Cardiac septum (tissue), 1 donor: ENCODE measurements at regions of chr2 and their contacts with region 1.

Region 1: DNA sequence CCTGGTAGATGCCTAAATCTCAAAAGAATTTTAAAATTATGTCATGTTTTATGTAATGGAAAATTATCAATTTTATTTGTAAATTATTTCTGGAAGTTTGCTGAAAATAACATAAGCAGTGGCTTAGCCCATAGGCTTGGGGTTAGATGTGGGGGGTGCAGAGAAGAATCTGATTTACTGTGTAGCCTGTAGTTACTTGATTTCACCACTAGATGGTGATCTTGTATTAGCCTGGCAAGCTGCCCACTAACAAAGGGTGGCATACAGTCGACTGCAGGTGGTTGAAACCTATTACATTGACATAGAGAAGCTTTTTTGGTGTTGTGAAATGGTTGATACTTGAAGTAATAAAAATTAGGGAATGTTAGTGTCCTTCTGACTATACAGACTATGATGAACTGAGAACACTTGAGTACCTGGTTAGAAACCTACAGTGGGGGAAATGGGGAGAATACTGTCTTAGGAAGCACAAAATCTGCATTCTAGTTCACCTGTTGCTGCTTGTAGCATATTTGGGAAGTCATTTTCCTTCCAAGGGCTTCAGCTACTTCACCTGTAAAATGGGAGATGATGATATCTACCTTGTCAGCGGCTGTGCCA is 191.0 kb upstream of the LHCGR start:
- DNase-seq: no peak

Region 2: DNA sequence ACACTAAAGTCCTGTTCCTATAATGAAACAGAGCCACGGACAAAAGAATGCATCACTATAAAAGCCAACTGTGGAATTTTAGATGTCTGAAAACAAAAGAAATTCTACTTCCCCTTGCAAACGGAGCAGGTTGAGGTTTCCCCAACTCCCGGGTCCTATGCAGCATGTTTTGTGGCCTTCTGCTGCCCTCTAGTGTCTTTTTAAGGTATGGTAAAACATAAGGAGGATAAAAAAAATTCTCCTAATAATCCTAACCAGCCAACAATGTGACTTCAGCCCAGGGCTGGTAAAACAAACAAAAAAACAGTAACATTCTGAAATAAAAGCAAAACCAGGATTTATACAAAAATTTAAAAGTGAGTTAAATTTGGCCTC is 1545.9 kb after region 1 on chr2:
- intact Hi-C with region 1: loop called (anchors 10 kb)
- DNase-seq: no peak